Kidney (tissue), 22 donors: ENCODE measurements at regions of chr1 and their contacts with region 1.

Region 1: DNA sequence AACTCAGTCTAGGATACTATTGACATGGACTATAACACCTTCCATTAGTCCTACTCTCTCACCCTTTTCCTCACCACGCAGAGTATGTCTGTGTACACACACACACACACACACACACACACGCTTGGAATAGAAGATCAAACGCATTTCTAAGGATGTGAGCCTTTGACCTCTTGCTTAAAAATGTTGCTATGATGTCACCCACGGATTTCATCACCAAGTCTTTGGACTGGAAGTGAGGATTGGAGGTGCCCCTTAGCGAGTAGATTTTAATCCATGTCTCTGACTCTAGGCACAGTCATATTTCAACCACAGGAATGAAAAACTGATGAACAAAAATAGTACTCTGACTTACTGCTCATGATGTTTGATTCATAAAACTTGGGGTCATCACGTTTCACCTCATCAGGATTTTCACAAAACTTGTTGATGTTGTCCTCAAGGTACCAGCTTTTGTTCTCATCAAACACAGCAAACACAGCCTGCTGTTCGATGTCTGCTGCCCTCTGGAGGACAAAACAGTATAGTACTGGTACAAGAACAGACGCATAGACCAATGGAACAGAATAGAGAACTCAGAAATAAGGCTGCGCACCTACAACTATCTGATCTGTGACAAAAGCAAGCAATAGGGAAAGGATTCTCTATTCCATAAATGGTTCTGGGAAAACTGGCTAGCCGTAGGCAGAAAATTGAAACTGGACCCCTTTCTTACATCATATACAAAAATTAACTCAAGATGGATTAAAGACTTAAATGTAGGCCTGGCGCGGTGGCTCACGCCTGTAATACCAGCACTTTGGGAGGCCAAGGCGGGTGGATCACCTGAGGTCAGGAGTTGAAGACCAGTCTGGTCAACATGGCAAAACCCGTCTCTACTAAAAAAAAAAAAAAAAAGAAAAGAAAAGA is 39.9 kb downstream of the F5 start:
- DNase-seq: peak in 3 of 5 donors; percentile 51 to 86 (median 82)
- H3K4me3 ChIP-seq: no peak overlapping the region
- H3K27ac ChIP-seq: no peak overlapping the region
- H3K4me1 ChIP-seq: no peaks in the 10 kb centered on the region
- H3K27me3 ChIP-seq: no peaks in the 10 kb centered on the region
- CTCF ChIP-seq: peak; percentile 86

Region 2: GRCh38 chr1:169466259-169467230 is 79.8 kb before region 1 on chr1:
- intact Hi-C with region 1: loop called (anchors 10 kb)
- DNase-seq: peak in 2 of 5 donors; percentile 29 to 44
- H3K4me3 ChIP-seq: no peak overlapping the region
- H3K27ac ChIP-seq: no peak overlapping the region
- H3K4me1 ChIP-seq: no peaks in the 10 kb centered on the region
- H3K27me3 ChIP-seq: no peaks in the 10 kb centered on the region
- CTCF ChIP-seq: peak; percentile 19

Region 3: GRCh38 chr1:169618367-169618766 is 72.0 kb after region 1 on chr1:
- intact Hi-C with region 1: no loop called
- DNase-seq: no peak
- H3K4me3 ChIP-seq: no peak overlapping the region
- H3K27ac ChIP-seq: no peak overlapping the region
- H3K4me1 ChIP-seq: peaks cover 0 to 2% (median 0%) of the 10 kb centered on the region in 3 donors
- H3K27me3 ChIP-seq: no peaks in the 10 kb centered on the region
- CTCF ChIP-seq: no peak